Activated naive CD4-positive, alpha-beta T cell treated with anti-CD3 and anti-CD28 coated beads for 36 hours (primary cell): ENCODE measurements at regions of chr4 and their contacts with region 1.

Region 1: DNA sequence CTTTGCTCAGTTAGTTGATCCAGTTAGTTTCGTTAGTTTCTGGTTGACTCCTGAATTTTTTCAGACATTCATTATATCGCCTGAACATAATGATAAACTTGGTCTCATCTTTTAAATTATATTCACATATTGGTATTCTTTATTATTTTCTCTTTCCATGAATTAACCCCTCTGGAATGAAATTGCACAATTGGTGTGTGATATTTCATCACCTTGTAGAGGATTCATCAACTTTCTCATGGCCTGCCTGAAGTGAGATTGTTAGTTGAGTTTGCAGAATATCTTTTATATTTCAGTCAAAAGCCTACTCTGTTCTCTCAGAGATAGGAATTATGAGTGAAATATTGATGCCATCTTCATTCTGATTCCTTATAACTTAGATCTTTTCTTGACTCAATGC is 1160.6 kb upstream of the AGA start:
- DNase-seq: no peak
- H3K4me3 Mint-ChIP-seq: no peak overlapping the region
- H3K27ac Mint-ChIP-seq: no peak overlapping the region
- H3K4me1 Mint-ChIP-seq: no peaks in the 10 kb centered on the region
- H3K27me3 Mint-ChIP-seq: no peaks in the 10 kb centered on the region

Region 2: DNA sequence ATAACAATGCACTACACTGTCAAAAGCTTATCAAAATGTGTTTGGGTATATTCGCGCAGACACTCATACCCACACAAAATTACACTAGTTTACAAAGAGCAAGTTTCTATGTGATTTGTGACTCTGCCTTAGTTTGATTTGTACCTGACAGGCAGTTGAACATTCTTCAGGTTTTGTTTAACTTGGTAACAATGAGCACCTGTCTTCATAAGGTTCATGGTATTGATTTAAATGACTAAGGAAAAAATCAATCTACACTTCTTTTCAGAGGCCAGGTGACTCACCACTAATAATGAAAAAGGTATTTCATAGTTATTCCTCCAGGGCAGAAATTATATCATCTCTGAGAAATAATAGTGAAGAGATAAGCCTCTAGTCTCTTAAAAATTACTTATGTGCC is 46.0 kb before region 1 on chr4:
- CTCF ChIA-PET with region 1: no interaction called
- intact Hi-C with region 1: loop called (anchors 1 kb)
- DNase-seq: no peak
- H3K4me3 Mint-ChIP-seq: no peak overlapping the region
- H3K27ac Mint-ChIP-seq: no peak overlapping the region
- H3K4me1 Mint-ChIP-seq: no peaks in the 10 kb centered on the region
- H3K27me3 Mint-ChIP-seq: no peaks in the 10 kb centered on the region